Endothelial cell of umbilical vein (primary cell): ENCODE measurements at regions of chr1 and their contacts with region 1.

Region 1: GRCh38 chr1:21149862-21150432 is 26.8 kb downstream of the EIF4G3 start:
- DNase-seq: no peak
- H3K4me3 ChIP-seq: no peak overlapping the region
- H3K27ac ChIP-seq: peak overlapping the region; percentile 74
- H3K4me1 ChIP-seq: peaks cover 19% of the 10 kb centered on the region
- H3K27me3 ChIP-seq: no peaks in the 10 kb centered on the region
- CTCF ChIP-seq: no peak
- POLR2A ChIP-seq: no peak

Region 2: GRCh38 chr1:21022279-21023040 is 127.5 kb before region 1 on chr1:
- CTCF ChIA-PET with region 1: no interaction called
- POLR2A ChIA-PET with region 1: no interaction called
- dilution Hi-C with region 1: no loop called
- intact Hi-C with region 1: loop called (anchors 1 kb)
- DNase-seq: peak; percentile 99
- H3K4me3 ChIP-seq: peak overlapping the region in 1 of 3 experiments; percentile 40
- H3K27ac ChIP-seq: peak overlapping the region; percentile 98
- H3K4me1 ChIP-seq: peaks cover 15% of the 10 kb centered on the region
- H3K27me3 ChIP-seq: no peaks in the 10 kb centered on the region
- CTCF ChIP-seq: no peak
- POLR2A ChIP-seq: no peak

Region 3: DNA sequence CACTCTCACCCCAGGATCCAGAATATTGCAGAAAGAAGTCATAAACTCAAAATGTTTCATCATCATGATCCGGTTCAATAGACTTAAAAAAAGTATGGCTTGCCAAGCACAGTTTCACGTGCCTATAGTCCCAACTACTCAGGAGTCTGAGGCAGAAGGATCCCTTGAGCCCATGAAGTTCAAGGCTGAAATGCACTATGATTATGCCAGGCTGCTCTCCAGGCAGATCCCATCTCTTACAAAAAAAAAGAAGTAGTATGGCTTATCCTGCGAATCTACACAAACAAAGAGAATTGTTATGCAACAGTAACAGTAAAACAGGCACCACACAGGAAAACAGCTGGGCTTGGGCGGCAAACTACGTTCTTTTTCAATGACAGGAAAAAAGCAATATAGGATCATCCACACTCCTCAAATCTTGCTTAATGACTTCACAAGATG is 49.4 kb before region 1 on chr1:
- CTCF ChIA-PET with region 1: no interaction called
- POLR2A ChIA-PET with region 1: no interaction called
- dilution Hi-C with region 1: no loop called
- intact Hi-C with region 1: no loop called
- DNase-seq: peak; percentile 75
- H3K4me3 ChIP-seq: no peak overlapping the region
- H3K27ac ChIP-seq: no peak overlapping the region
- H3K4me1 ChIP-seq: peaks cover 30% of the 10 kb centered on the region
- H3K27me3 ChIP-seq: no peaks in the 10 kb centered on the region
- CTCF ChIP-seq: no peak
- POLR2A ChIP-seq: no peak

Region 4: DNA sequence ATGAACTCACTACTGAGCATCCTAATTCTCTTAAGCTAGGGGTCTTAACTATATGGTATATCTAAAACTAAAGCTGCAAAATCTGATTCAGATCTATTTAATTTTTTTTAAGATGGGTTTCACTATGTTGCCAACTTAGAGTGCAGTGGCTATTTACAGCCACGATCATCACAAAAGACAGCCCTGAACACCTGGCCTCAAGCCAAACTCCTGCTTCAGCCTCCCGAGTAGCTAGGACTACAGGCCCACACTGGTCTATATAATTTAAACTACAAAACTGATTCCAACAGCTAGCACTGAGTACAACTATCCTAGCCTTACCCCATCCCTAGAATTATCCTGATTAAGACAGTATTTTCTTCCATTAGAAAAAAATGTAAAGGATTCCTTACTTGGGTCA is 10.3 kb before region 1 on chr1:
- CTCF ChIA-PET with region 1: interaction called, 10 read pairs
- POLR2A ChIA-PET with region 1: no interaction called
- dilution Hi-C with region 1: no loop called
- intact Hi-C with region 1: no loop called
- DNase-seq: peak; percentile 50
- H3K4me3 ChIP-seq: no peak overlapping the region
- H3K27ac ChIP-seq: no peak overlapping the region
- H3K4me1 ChIP-seq: no peaks in the 10 kb centered on the region
- H3K27me3 ChIP-seq: no peaks in the 10 kb centered on the region
- CTCF ChIP-seq: no peak
- POLR2A ChIP-seq: no peak

Region 5: GRCh38 chr1:21176586-21177555 is 26.9 kb after region 1 on chr1 and contains the start of gene EIF4G3:
- CTCF ChIA-PET with region 1: interaction called, 4 read pairs
- POLR2A ChIA-PET with region 1: no interaction called
- dilution Hi-C with region 1: no loop called
- intact Hi-C with region 1: loop called (anchors 2 kb)
- DNase-seq: peak; percentile 98
- H3K4me3 ChIP-seq: peak within 1 kb of the TSS; percentile 84 to 100 (median 94)
- H3K27ac ChIP-seq: peak within 1 kb of the TSS; percentile 86
- H3K4me1 ChIP-seq: peaks cover 12% of the 10 kb centered on the region
- H3K27me3 ChIP-seq: no peaks in the 10 kb centered on the region
- CTCF ChIP-seq: no peak
- POLR2A ChIP-seq: peak; percentile 76
- total RNA-seq, gene EIF4G3: 78.5 and 84.0 TPM in 2 replicates